Ascending aorta (tissue), 2 donors: ENCODE measurements at regions of chr15 and their contacts with region 1.

Region 1: GRCh38 chr15:53197426-53197839 is 407.3 kb upstream of the ONECUT1 start:
- DNase-seq: peak in 1 of 2 donors; percentile 65
- H3K4me3 ChIP-seq: peak overlapping the region; percentile 0 to 17
- H3K27ac ChIP-seq: no peak overlapping the region
- H3K4me1 ChIP-seq: no peaks in the 10 kb centered on the region
- H3K27me3 ChIP-seq: no peaks in the 10 kb centered on the region
- CTCF ChIP-seq: peak; percentile 7 to 71 (median 65)

Region 2: DNA sequence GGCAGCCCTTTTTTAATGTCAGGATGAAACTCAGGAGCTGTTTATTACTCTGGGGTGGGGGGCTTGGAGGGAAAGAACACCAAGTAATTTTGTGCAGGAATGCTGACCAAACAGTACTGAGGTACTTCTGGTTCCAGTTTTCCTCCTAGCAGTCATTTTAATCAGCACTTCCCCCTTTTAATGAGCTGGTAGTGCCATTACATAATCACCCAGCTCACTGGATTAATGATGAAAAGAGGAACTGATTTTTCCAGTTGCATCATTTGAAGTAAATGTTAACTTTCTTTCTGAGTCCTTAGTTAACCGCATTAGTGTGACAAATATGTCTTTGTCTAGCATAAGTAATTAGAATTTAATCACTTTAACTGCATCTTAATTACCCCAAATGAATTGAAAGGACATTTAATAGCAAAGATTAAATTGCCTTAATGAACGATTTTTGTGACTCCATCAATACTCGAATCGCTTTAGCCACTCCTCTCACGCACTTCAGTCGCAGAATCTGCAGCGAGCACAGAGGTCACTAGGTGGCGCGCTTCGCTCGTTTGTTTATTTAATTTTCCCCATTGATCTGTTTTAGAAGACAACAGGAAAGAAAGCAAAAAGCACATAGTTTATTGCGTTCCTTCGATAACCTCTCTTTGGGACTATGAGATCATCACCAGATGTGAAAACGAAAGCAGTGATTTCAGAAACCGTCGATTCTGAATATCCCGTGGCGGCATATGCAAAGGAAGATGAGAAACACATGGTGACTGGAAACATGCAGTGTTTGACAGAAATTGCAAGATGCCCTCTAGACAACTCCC is 417.1 kb before region 1 on chr15:
- intact Hi-C with region 1: loop called (anchors 10 kb)
- DNase-seq: no peak
- H3K4me3 ChIP-seq: peak overlapping the region in 1 of 2 donors; percentile 34
- H3K27ac ChIP-seq: no peak overlapping the region
- H3K4me1 ChIP-seq: peaks cover 0 to 14% of the 10 kb centered on the region in 2 donors
- H3K27me3 ChIP-seq: peaks cover 14% of the 10 kb centered on the region
- CTCF ChIP-seq: peak; percentile 33 to 83 (median 69)